PC-3 (cell line): ENCODE measurements at regions of chr19 and their contacts with region 1.

Region 1: GRCh38 chr19:12551060-12551832 is at the start of gene ZNF564:
- DNase-seq: peak; percentile 99
- ATAC-seq: peak; percentile 97
- H3K4me3 ChIP-seq: peak within 1 kb of the TSS; percentile 83
- H3K27ac ChIP-seq: peak within 1 kb of the TSS; percentile 73
- H3K4me1 ChIP-seq: 0 out of 2 replicates have a peak, but pooled peaks cover 6% of the 10 kb centered on the region
- H3K27me3 ChIP-seq: no peaks in the 10 kb centered on the region
- CTCF ChIP-seq: no peak
- total RNA-seq, gene ZNF564: 3.8 and 6.0 TPM in 2 replicates

Region 2: DNA sequence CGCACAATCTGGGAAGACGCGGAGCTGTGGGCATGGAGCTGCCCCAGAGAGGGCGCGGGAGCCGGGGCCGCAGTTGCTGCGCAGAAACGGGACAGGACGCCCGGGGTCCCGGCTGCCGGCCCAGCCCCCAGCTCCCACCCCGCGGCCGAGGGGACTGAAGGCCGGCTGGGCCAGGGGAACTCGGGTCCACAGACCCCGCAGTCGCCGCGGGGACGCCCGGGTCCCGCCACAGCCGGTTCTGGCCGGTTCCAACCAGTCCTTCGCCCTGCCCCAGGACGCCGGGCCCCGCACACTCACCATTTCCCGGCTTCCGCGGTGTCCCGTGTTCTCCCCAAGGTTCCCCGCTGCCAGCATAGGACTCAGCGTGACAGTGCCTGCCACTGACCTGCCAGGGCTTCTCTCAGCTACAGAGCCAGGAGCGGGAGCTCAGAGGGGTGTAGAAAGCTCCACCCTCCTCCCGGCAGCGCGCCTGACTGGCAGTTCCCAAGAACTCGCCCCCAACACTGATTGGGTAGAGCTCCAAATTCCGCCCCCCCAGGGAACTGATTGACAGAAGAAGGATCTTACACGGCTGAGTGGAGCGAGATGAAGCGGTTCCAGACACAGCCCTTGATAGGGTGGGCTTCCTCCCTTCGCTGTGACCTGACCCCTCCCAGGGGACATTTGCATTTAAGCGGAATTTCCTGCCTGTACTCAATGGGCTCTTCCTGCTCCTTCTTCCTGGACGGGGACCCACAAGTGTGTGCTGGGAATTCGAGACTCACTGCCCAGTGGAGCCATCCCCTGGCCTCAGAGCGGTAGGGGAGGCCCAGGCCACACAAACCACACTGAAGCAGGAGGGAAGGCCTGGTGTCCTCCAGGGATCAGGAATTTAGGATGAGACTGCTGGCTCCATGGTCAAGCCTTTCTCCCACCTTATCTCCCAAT is 185.7 kb before region 1 on chr19 and contains the start of gene ZNF442:
- CTCF ChIA-PET with region 1: no interaction called
- POLR2A ChIA-PET with region 1: no interaction called
- intact Hi-C with region 1: loop called (anchors 1 kb)
- DNase-seq: peak; percentile 96
- ATAC-seq: peak; percentile 97
- H3K4me3 ChIP-seq: peak within 1 kb of the TSS; percentile 82
- H3K27ac ChIP-seq: no peak within 1 kb of the TSS
- H3K4me1 ChIP-seq: no peaks in the 10 kb centered on the region; the same call in 1 of the 2 replicates
- H3K27me3 ChIP-seq: no peaks in the 10 kb centered on the region
- CTCF ChIP-seq: peak; percentile 64
- total RNA-seq, gene ZNF442: 0.63 and 1.1 TPM in 2 replicates

Region 3: GRCh38 chr19:12400633-12401502 is 150.4 kb before region 1 on chr19 and contains the start of gene ZNF799:
- CTCF ChIA-PET with region 1: no interaction called
- POLR2A ChIA-PET with region 1: no interaction called
- intact Hi-C with region 1: loop called (anchors 2 kb)
- DNase-seq: peak; percentile 99
- ATAC-seq: peak; percentile 96
- H3K4me3 ChIP-seq: peak within 1 kb of the TSS; percentile 92
- H3K27ac ChIP-seq: peak within 1 kb of the TSS; percentile 67
- H3K4me1 ChIP-seq: 0 out of 2 replicates have a peak, but pooled peaks cover 4% of the 10 kb centered on the region
- H3K27me3 ChIP-seq: no peaks in the 10 kb centered on the region
- CTCF ChIP-seq: 0 out of 2 replicates have a peak, but pooled peaks have one; percentile 18
- total RNA-seq, gene ZNF799: 3.8 and 5.9 TPM in 2 replicates

Region 4: DNA sequence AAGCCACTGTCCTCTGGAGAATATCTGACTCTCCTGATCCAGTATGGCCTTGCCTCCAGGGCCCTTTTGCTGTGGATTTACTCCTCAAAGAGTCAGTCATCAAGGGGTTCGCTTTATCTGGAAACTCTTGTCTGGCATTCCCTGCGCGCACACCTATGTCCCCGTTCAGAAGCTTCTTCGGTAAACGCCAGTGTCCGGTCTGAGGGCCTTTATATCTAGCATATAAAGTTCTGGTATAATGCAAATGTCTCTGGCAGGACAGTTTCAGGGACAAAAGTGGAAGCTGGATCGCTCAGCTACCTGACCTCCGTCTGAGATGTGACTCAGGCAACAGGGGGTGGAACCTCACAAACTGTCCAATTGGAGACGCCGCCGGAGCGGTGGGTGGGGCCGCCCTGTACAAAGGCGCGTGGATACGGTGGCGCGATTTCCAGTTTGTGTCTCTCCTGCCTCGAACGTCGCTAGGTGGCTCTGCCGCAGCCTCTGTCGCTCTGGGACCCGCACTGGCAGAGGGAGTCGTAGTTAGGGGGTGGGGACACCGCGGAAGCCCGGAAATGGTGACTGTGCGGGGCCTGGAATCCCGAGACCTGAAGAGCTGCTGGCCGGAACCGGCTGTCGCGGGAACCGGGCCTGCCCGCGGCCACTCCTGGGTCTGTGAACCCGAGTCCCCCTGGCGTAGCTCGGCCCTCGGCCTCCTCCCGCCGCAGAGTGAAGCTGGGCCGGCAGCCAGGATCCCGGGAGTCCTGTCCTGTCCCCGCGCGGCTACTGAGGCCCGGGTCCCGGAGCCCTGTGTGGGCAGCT is 56.0 kb before region 1 on chr19:
- CTCF ChIA-PET with region 1: no interaction called
- POLR2A ChIA-PET with region 1: no interaction called
- intact Hi-C with region 1: loop called (anchors 2 kb)
- DNase-seq: peak; percentile 85
- ATAC-seq: peak; percentile 97
- H3K4me3 ChIP-seq: peak overlapping the region; percentile 62
- H3K27ac ChIP-seq: no peak overlapping the region
- H3K4me1 ChIP-seq: no peaks in the 10 kb centered on the region
- H3K27me3 ChIP-seq: no peaks in the 10 kb centered on the region
- CTCF ChIP-seq: peak; percentile 54

Region 5: GRCh38 chr19:12639901-12640613 is 88.8 kb after region 1 on chr19:
- CTCF ChIA-PET with region 1: no interaction called
- POLR2A ChIA-PET with region 1: no interaction called
- intact Hi-C with region 1: no loop called
- DNase-seq: peak; percentile 64
- ATAC-seq: peak; percentile 81
- H3K4me3 ChIP-seq: no peak overlapping the region
- H3K27ac ChIP-seq: no peak overlapping the region
- H3K4me1 ChIP-seq: no peaks in the 10 kb centered on the region
- H3K27me3 ChIP-seq: no peaks in the 10 kb centered on the region
- CTCF ChIP-seq: peak; percentile 83